Activated B cell treated with CpG ODN at 0.5 μM for 24 hours (primary cell): ENCODE measurements at regions of chr6 and their contacts with region 1.

Region 1: GRCh38 chr6:34236131-34236996 is at the start of gene HMGA1:
- DNase-seq: peak; percentile 90
- ATAC-seq: peak; percentile 77
- H3K4me3 Mint-ChIP-seq: peak within 1 kb of the TSS; percentile 89
- H3K27ac Mint-ChIP-seq: peak within 1 kb of the TSS; percentile 95
- H3K4me1 Mint-ChIP-seq: peaks cover 36% of the 10 kb centered on the region
- H3K27me3 Mint-ChIP-seq: no peaks in the 10 kb centered on the region
- CTCF ChIP-seq: no peak
- total RNA-seq, gene HMGA1: 186 and 188 TPM in 2 replicates

Region 2: GRCh38 chr6:34182751-34183531 is 53.4 kb before region 1 on chr6:
- CTCF ChIA-PET with region 1: interaction called, 3 read pairs
- POLR2A ChIA-PET with region 1: interaction called, 19 read pairs
- intact Hi-C with region 1: no loop called
- DNase-seq: no peak
- ATAC-seq: peak; percentile 84
- H3K4me3 Mint-ChIP-seq: peak overlapping the region; percentile 79
- H3K27ac Mint-ChIP-seq: peak overlapping the region; percentile 95
- H3K4me1 Mint-ChIP-seq: peaks cover 23% of the 10 kb centered on the region
- H3K27me3 Mint-ChIP-seq: no peaks in the 10 kb centered on the region
- CTCF ChIP-seq: no peak

Region 3: DNA sequence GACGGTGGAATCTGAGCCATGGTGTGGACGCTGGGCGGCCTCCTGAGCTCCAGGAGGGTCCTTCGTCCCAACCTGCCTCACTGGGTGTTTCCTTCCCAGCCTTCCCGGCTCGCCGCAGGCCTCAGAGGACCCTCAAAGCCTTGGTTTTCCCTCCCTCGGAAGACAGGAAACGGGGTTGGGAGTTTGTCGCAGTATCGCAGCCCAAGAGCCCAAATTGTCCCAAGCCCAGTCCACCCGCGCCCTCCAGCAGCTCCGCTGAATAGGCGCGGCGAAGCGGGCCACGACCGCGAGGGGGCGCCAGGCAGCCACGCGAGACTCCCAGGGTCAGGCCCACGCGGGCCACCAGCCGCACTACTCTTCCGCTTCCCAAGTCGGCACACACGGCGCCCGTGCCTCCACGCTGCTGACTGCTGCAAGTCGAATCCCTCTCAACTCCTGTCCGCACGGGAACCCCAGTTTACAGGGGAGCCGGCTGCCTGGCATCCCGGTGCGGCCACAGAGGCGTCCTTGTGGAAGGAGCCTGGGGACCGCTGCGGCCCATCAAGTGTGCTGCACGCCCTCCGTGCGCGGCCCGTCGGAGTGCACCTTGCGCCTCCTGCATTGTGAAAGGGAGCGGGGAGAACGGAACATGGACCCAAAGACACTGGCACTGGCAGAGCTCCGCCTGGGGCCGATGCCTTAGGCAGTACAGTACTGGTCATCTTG is 40.1 kb before region 1 on chr6:
- CTCF ChIA-PET with region 1: interaction called, 15 read pairs
- POLR2A ChIA-PET with region 1: interaction called, 57 read pairs
- intact Hi-C with region 1: loop called (anchors 1 kb)
- DNase-seq: peak; percentile 94
- ATAC-seq: peak; percentile 99
- H3K4me3 Mint-ChIP-seq: peak overlapping the region; percentile 91
- H3K27ac Mint-ChIP-seq: peak overlapping the region; percentile 83
- H3K4me1 Mint-ChIP-seq: peaks cover 8% of the 10 kb centered on the region
- H3K27me3 Mint-ChIP-seq: no peaks in the 10 kb centered on the region
- CTCF ChIP-seq: peak; percentile 78

Region 4: DNA sequence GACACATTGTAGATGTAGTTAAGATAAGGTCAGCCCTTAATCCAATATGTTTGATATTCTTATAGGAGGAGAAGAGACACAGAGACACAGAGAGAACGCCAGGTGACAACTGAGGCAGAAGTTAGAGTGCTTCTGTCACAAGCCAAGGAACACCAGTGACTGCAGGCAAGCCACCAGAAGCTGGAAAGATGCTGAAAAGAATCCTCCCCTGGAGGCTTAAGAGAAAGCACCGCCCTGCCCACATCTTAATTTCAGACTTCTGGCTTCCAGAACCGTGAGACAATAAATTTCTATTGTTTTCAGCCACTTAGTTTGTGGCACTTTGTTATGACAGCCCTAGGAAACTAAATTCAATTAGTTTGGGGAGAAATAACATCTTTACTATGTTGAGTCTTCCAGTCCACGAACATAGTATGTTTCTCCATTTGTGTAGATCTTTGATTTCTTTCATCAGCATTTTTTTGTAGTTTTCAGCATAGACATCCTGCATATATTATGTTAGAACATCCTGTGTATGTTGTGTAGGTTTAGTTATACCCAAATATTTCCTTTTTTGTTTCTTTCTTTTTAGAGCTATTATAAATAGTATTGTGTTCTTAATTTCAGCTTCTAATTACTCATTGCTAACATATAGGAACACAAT is 17.8 kb before region 1 on chr6:
- CTCF ChIA-PET with region 1: interaction called, 9 read pairs
- POLR2A ChIA-PET with region 1: interaction called, 297 read pairs
- intact Hi-C with region 1: no loop called
- DNase-seq: no peak
- ATAC-seq: no peak
- H3K4me3 Mint-ChIP-seq: no peak overlapping the region
- H3K27ac Mint-ChIP-seq: peak overlapping the region; percentile 83
- H3K4me1 Mint-ChIP-seq: peaks cover 27% of the 10 kb centered on the region
- H3K27me3 Mint-ChIP-seq: no peaks in the 10 kb centered on the region
- CTCF ChIP-seq: no peak

Region 5: DNA sequence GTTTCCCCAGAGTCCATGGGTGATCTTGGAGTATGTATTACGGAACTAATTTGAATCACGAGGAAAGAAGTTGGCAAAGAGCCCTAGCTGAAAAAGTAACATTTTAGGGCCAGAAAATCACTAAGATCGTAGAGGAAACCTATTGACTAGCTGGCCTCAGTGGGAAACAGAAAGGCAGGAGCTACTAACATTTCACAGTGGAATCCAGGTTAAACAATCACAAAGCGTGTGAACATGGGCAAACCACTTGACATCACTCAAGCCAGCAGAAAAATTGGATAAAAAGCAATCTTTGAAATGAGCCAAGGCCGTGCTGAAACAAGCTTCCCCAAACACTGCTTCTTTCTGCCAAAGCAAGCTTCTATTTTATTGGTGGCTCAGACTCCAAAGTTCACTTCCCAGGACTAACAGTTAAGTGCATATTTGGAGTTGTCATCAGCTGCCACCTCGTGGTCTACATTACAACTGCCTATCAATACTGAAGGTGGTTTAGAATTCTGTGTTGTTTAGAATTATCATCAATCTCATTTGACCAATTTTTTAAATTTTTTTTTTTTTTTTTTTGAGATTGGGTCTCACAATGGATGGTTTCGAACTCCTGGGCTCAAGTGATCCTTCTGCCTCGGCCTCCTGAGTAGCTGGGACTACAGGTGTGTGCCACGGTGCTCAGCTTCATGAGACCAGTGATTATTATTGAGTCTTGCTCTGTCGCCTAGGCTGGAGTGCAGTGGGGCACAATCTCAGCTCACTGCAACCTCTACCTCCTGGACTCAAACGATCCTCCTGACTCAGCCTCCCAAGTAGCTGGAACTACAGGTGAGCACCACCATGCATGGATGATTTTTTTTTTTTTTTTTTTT is 178.9 kb after region 1 on chr6:
- CTCF ChIA-PET with region 1: interaction called, 4 read pairs
- POLR2A ChIA-PET with region 1: interaction called, 10 read pairs
- intact Hi-C with region 1: no loop called
- DNase-seq: no peak
- ATAC-seq: peak; percentile 83
- H3K4me3 Mint-ChIP-seq: no peak overlapping the region
- H3K27ac Mint-ChIP-seq: no peak overlapping the region
- H3K4me1 Mint-ChIP-seq: peaks cover 6% of the 10 kb centered on the region
- H3K27me3 Mint-ChIP-seq: no peaks in the 10 kb centered on the region
- CTCF ChIP-seq: no peak

Region 6: GRCh38 chr6:35259194-35259947 is 1023.0 kb after region 1 on chr6 and contains the start of gene ZNF76:
- CTCF ChIA-PET with region 1: no interaction called
- POLR2A ChIA-PET with region 1: no interaction called
- intact Hi-C with region 1: loop called (anchors 5 kb)
- DNase-seq: peak; percentile 89
- ATAC-seq: peak; percentile 81
- H3K4me3 Mint-ChIP-seq: peak within 1 kb of the TSS; percentile 97
- H3K27ac Mint-ChIP-seq: peak within 1 kb of the TSS; percentile 93
- H3K4me1 Mint-ChIP-seq: peaks cover 53% of the 10 kb centered on the region
- H3K27me3 Mint-ChIP-seq: no peaks in the 10 kb centered on the region
- CTCF ChIP-seq: no peak
- total RNA-seq, gene ZNF76: 54.8 and 57.9 TPM in 2 replicates